Heart left ventricle (tissue), 16 donors: ENCODE measurements at regions of chr5 and their contacts with region 1.

Region 1: DNA sequence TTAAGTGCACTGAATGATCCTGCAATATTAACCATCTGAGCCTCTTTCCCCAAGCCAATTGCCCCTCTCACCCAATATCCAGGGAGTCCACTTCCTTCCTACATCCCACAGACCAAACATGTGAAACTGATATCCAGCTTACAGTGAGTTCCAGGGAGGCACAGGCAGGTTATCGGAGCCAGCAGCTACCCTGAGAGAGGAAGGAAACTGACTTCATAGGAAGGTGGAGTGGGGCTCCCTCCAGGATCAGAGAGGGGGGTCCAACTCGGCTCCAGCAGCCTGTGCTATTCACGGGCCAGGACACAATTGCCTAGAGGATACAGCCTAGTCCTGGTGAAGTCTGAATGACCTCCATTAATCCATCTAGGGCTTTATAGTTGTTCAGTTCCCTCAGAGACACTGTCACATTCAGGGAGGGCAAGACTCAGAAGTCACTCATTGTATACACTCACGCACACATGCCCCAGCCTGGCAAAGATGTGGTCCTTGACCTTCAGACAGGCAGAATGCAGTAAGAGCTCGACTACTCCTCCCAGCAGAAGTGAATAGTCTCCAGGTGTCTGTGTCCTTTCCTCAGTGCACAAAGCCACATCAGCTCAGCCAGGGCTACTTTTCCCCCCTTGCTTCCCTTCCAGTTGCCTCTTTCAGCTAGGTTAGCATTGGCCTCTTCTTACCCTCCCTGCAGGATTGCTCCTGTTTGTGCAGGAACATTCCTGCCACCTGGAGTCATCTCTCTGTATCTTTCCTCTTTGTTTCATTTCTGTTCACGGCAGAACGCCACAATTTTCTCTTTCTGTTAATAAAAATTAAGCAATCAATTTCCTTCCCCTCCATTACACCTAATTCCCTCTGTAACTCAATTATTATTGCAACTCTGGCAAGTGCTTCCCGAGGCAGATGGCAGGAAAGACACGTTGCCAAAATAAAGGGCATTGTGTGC is 501.7 kb downstream of the ARHGEF28 start:
- DNase-seq: peak in 2 of 5 donors; percentile 27 to 29
- ATAC-seq: peak; percentile 14 to 86 (median 68)
- H3K4me3 ChIP-seq: no peak overlapping the region
- H3K27ac ChIP-seq: peak overlapping the region in 1 of 12 donors; percentile 13
- H3K4me1 ChIP-seq: peaks cover 0 to 25% (median 12%) of the 10 kb centered on the region in 12 donors
- H3K27me3 ChIP-seq: no peaks in the 10 kb centered on the region
- CTCF ChIP-seq: peak in 1 of 12 donors; percentile 6
- POLR2A ChIP-seq: no peak

Region 2: GRCh38 chr5:74079971-74080556 is 47.6 kb before region 1 on chr5:
- intact Hi-C with region 1: loop called in 1 of 10 experiments (anchors 1 kb)
- DNase-seq: no peak
- ATAC-seq: no peak
- H3K4me3 ChIP-seq: no peak overlapping the region
- H3K27ac ChIP-seq: no peak overlapping the region
- H3K4me1 ChIP-seq: no peaks in the 10 kb centered on the region
- H3K27me3 ChIP-seq: no peaks in the 10 kb centered on the region
- CTCF ChIP-seq: no peak
- POLR2A ChIP-seq: no peak

Region 3: GRCh38 chr5:74201334-74202081 is 73.9 kb after region 1 on chr5:
- intact Hi-C with region 1: loop called in 1 of 10 experiments (anchors 1 kb)
- DNase-seq: peak; percentile 42 to 75 (median 58)
- ATAC-seq: peak; percentile 47 to 82 (median 74)
- H3K4me3 ChIP-seq: no peak overlapping the region
- H3K27ac ChIP-seq: peak overlapping the region in 3 of 12 donors; percentile 6 to 13 (median 8)
- H3K4me1 ChIP-seq: peaks cover 0 to 39% (median 21%) of the 10 kb centered on the region in 12 donors
- H3K27me3 ChIP-seq: no peaks in the 10 kb centered on the region
- CTCF ChIP-seq: no peak
- POLR2A ChIP-seq: no peak